ENCODE measurements at regions of chr19 and their contacts with region 1.

Region 1: GRCh38 chr19:51904331-51905165 is at the start of gene ZNF649:
- DNase-seq: peak; percentile 84
- H3K4me3 ChIP-seq: peak within 1 kb of the TSS; percentile 91 to 98 (median 94)
- H3K27ac ChIP-seq: peak within 1 kb of the TSS; percentile 46
- H3K4me1 ChIP-seq: no peaks in the 10 kb centered on the region
- H3K27me3 ChIP-seq: no peaks in the 10 kb centered on the region
- CTCF ChIP-seq: no peak
- POLR2A ChIP-seq: no peak
- total RNA-seq, gene ZNF649: 8.6 and 9.0 TPM in 2 replicates

Region 2: DNA sequence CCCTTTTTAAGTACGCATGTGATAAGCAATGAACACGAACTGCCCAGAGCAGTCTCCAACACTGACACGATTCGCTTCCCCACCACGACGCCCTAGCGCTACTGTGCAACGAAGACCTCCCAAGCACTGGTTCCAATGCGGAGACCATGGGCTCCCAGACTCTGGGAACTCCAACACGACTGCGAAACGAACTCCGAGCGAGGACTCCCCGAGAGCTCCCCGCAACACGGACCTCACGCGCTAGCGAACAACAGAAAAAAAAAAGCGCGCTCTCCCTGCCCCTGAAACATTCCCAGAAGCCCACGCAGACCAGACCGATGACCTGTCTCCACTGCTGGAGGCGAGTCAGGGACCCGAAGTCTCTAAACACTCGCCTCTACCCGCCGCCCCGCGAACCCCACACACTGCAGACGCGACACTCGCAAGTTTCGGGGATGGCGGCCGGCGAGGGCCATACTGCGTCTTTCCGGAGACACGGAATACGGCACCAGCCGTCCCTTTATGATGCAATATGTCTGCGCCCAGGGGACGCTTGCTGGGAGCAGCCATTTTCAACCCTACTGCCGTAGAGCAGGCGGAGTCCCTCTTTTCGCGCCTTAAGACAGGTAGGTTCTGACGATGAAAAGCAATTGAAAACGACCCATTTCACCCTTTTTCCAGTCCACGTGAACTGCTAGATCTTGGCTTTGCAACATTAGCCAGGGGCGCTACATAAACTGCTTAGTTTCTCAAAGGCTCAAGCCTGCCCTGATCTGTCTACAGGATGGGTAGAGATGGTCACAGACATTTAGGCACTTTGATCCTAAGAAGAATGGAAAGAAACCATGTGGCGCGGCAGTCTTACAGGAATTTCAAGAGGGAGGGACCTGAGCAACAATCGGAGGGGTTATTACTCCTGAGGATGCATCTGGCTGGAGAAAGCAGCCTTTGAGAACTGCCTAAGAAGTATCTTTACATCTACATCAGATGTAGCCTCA is 16.7 kb before region 1 on chr19 and contains the start of gene ZNF577:
- CTCF ChIA-PET with region 1: no interaction called
- POLR2A ChIA-PET with region 1: no interaction called
- dilution Hi-C with region 1: no loop called
- intact Hi-C with region 1: loop called (anchors 1 kb)
- DNase-seq: peak; percentile 89
- H3K4me3 ChIP-seq: peak within 1 kb of the TSS; percentile 40 to 73 (median 58)
- H3K27ac ChIP-seq: peak within 1 kb of the TSS; percentile 4
- H3K4me1 ChIP-seq: no peaks in the 10 kb centered on the region
- H3K27me3 ChIP-seq: no peaks in the 10 kb centered on the region
- CTCF ChIP-seq: no peak
- POLR2A ChIP-seq: peak; percentile 69
- total RNA-seq, gene ZNF577: 3.2 and 4.0 TPM in 2 replicates

Region 3: DNA sequence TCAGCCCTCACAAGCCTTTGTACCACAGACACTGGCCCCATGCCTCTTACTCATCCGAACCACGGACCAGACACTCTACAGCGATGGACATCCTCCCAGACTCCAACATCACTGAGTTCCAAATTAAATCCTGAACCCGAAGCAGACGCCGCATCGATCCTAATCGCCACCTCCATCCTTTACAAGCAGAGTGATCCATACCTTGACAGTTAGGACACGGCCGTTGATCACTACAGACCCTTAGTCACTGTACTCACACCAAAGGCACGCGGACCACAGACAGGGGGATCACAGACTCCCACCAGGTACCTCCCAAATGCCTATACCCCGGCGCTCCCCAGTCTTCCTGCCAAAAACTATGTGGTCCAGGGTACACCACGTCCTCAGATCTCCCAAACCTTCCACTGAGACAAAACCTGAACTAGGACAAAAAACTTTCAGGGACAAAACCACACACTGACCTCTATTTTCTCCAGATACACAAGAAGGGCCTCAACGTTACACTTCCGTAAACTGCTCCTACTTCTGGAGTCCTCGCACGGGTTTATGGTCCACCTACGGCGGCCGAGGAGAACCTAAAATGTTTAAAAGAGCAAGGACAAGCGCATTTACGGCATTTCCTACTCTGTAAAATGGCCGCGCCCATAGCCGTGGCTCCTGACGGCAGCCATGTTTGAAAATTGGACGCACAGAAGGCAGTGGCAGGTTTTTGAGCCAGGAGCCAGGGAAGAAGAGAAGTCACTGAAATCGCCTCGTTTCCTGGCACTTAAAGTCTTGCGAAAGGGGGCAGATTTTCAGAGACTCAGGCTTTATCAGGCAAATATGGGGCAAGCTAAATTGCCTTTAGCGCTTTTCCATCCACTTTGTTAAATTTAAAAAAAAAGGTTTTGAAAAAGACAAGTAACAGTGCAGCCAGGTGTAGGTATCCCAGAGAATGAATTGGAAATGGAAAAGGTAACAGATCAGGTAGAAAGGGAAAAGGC is 82.1 kb after region 1 on chr19 and contains the start of gene ZNF350:
- CTCF ChIA-PET with region 1: no interaction called
- POLR2A ChIA-PET with region 1: no interaction called
- dilution Hi-C with region 1: no loop called
- intact Hi-C with region 1: loop called (anchors 1 kb)
- DNase-seq: peak; percentile 95
- H3K4me3 ChIP-seq: peak within 1 kb of the TSS; percentile 58 to 80 (median 61)
- H3K27ac ChIP-seq: peak within 1 kb of the TSS; percentile 48
- H3K4me1 ChIP-seq: peaks cover 2% of the 10 kb centered on the region
- H3K27me3 ChIP-seq: no peaks in the 10 kb centered on the region
- CTCF ChIP-seq: no peak
- POLR2A ChIP-seq: no peak
- total RNA-seq, gene ZNF350: 8.4 and 9.8 TPM in 2 replicates

Region 4: DNA sequence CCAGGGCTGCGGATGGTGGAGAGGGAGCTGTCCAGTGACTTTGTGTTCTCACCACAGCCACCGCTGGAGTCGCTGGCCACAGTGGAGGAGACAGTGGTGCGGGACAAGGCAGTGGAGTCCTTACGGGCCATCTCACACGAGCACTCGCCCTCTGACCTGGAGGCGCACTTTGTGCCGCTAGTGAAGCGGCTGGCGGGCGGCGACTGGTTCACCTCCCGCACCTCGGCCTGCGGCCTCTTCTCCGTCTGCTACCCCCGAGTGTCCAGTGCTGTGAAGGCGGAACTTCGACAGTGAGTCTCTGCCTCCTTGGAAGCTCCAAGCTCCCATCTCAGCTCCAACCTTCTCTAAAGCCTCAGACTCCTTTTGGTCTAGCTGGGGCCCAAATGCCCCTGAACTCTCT is 306.7 kb after region 1 on chr19:
- CTCF ChIA-PET with region 1: no interaction called
- POLR2A ChIA-PET with region 1: no interaction called
- dilution Hi-C with region 1: no loop called
- intact Hi-C with region 1: no loop called
- DNase-seq: no peak
- H3K4me3 ChIP-seq: no peak overlapping the region
- H3K27ac ChIP-seq: no peak overlapping the region
- H3K4me1 ChIP-seq: no peaks in the 10 kb centered on the region
- H3K27me3 ChIP-seq: no peaks in the 10 kb centered on the region
- CTCF ChIP-seq: no peak
- POLR2A ChIP-seq: no peak

Measured in endothelial cell of umbilical vein (primary cell).